ENCODE measurements at regions of chr2 and their contacts with region 1.

Region 1: DNA sequence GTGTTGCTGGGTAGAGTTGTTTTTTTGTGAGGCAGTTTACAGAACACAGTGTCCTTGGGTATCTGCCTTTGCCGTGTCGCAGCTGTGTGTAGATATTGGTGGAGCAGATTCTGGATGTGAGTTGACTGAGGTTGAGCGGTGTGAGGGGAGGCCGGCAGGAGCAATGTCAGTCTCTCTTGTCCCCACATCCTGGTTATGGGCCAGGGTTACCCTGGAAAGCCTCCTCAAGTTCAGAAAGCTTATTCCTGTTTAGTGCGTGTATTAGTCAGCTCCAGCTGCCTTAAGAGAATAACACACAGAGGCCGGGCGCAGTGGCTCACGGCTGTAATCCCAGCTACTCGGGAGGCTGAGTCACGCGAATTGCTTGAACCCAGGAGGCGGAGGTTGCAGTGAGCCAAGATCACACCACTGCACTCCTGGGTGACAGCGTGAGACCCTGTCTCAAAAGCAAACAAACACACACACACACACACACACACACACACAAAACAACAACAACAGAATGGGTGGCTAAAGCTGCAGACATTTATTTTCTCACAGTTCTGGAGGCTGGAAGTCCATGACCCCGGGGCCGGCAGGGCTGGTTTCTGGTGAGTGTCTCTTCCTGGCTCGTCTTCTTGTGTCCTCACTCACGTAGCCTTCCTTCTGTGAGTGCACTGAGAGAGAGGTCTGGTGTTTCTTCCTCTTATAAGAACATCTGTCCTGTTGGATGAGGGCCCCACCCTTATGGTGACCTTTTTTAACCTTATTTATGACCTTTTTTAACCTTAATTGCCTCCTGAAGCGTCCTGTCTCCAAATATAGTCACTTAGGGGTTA is 5.1 kb downstream of the NCK2 start:
- DNase-seq: peak; percentile 67
- ATAC-seq: peak; percentile 4
- H3K4me3 Mint-ChIP-seq: peak overlapping the region; percentile 94
- H3K27ac Mint-ChIP-seq: peak overlapping the region; percentile 98
- H3K4me1 Mint-ChIP-seq: peaks cover 63% of the 10 kb centered on the region
- H3K27me3 Mint-ChIP-seq: no peaks in the 10 kb centered on the region
- CTCF ChIP-seq: no peak

Region 2: GRCh38 chr2:105691947-105692390 is 57.8 kb before region 1 on chr2:
- CTCF ChIA-PET with region 1: no interaction called
- POLR2A ChIA-PET with region 1: no interaction called
- intact Hi-C with region 1: no loop called
- DNase-seq: no peak
- ATAC-seq: no peak
- H3K4me3 Mint-ChIP-seq: no peak overlapping the region
- H3K27ac Mint-ChIP-seq: no peak overlapping the region
- H3K4me1 Mint-ChIP-seq: no peaks in the 10 kb centered on the region
- H3K27me3 Mint-ChIP-seq: no peaks in the 10 kb centered on the region
- CTCF ChIP-seq: no peak

Region 3: DNA sequence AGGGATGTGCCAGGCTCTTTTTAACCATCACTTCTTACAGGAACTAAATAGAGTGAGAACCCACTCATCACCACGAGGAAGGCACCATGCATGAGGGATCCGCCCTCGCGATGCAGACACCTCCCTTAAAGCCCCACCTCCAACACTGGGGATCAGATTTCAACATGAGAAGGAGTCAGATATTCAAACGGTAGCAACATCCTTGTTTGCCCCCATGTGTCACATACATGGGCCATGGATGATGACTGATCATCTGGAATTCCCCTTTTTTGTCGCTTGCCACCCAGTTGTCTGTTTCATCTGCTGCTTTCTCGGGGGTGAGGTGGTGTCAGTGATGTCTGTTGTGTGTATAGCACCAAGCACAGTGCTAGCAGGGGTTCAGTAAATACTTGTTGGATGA is 52.8 kb after region 1 on chr2:
- CTCF ChIA-PET with region 1: interaction called, 14 read pairs
- POLR2A ChIA-PET with region 1: interaction called, 53 read pairs
- intact Hi-C with region 1: loop called (anchors 2 kb)
- DNase-seq: peak; percentile 84
- ATAC-seq: peak; percentile 78
- H3K4me3 Mint-ChIP-seq: peak overlapping the region; percentile 19
- H3K27ac Mint-ChIP-seq: peak overlapping the region; percentile 93
- H3K4me1 Mint-ChIP-seq: peaks cover 95% of the 10 kb centered on the region
- H3K27me3 Mint-ChIP-seq: no peaks in the 10 kb centered on the region
- CTCF ChIP-seq: no peak

Region 4: DNA sequence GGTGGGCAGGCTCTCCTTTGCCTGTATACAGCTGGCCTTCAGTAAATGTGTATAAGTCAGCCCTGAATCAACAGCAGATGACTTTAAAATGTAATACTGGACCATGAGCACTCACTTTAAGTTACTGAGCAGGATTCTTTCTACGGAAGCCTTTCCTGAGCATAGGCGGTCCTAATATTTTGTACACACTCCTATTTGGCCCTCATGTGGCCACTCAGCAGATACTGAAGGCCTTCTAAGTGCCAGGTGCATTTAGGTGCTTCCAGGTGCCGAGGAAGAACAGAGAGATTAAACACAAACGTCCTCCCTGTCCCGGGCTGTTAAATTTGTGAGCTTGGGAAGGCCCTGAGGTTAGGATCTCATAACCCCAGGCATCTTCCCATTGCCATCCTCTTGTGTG is 417.3 kb after region 1 on chr2:
- CTCF ChIA-PET with region 1: no interaction called
- POLR2A ChIA-PET with region 1: no interaction called
- intact Hi-C with region 1: no loop called
- DNase-seq: no peak
- ATAC-seq: no peak
- H3K4me3 Mint-ChIP-seq: no peak overlapping the region
- H3K27ac Mint-ChIP-seq: no peak overlapping the region
- H3K4me1 Mint-ChIP-seq: peaks cover 74% of the 10 kb centered on the region
- H3K27me3 Mint-ChIP-seq: no peaks in the 10 kb centered on the region
- CTCF ChIP-seq: no peak

Measured in activated CD8-positive, alpha-beta T cell treated with anti-CD3 and anti-CD28 coated beads for 36 hours (primary cell).